ENCODE measurements at regions of chr7 and their contacts with region 1.

Region 1: GRCh38 chr7:106982415-106982814 is 62.1 kb upstream of the PRKAR2B start:
- DNase-seq: no peak
- H3K4me3 ChIP-seq: no peak overlapping the region
- H3K27ac ChIP-seq: no peak overlapping the region
- H3K4me1 ChIP-seq: no peaks in the 10 kb centered on the region
- H3K27me3 ChIP-seq: no peaks in the 10 kb centered on the region
- CTCF ChIP-seq: no peak
- EP300 ChIP-seq: no peak
- POLR2A ChIP-seq: no peak

Region 2: GRCh38 chr7:105279688-105280007 is 1702.8 kb before region 1 on chr7:
- in situ Hi-C with region 1: no loop called
- intact Hi-C with region 1: loop called (anchors 10 kb)
- DNase-seq: no peak
- H3K4me3 ChIP-seq: no peak overlapping the region
- H3K27ac ChIP-seq: no peak overlapping the region
- H3K4me1 ChIP-seq: no peaks in the 10 kb centered on the region
- H3K27me3 ChIP-seq: no peaks in the 10 kb centered on the region
- CTCF ChIP-seq: no peak
- EP300 ChIP-seq: no peak
- POLR2A ChIP-seq: no peak

Region 3: GRCh38 chr7:106895246-106895864 is 87.1 kb before region 1 on chr7:
- in situ Hi-C with region 1: no loop called
- intact Hi-C with region 1: no loop called
- DNase-seq: peak; percentile 35
- H3K4me3 ChIP-seq: no peak overlapping the region
- H3K27ac ChIP-seq: no peak overlapping the region
- H3K4me1 ChIP-seq: no peaks in the 10 kb centered on the region
- H3K27me3 ChIP-seq: no peaks in the 10 kb centered on the region
- CTCF ChIP-seq: no peak
- EP300 ChIP-seq: no peak
- POLR2A ChIP-seq: no peak

Region 4: GRCh38 chr7:107242267-107242666 is 259.9 kb after region 1 on chr7:
- in situ Hi-C with region 1: no loop called
- intact Hi-C with region 1: no loop called
- DNase-seq: no peak
- H3K4me3 ChIP-seq: no peak overlapping the region
- H3K27ac ChIP-seq: no peak overlapping the region
- H3K4me1 ChIP-seq: no peaks in the 10 kb centered on the region
- H3K27me3 ChIP-seq: no peaks in the 10 kb centered on the region
- CTCF ChIP-seq: no peak
- EP300 ChIP-seq: no peak
- POLR2A ChIP-seq: no peak

Measured in transverse colon (tissue), 4 donors.